ENCODE measurements at regions of chr10 and their contacts with region 1.

Region 1: GRCh38 chr10:106592396-106592795 is 572.1 kb downstream of the SORCS1 start:
- DNase-seq: no peak
- H3K4me3 ChIP-seq: no peak overlapping the region
- H3K27me3 ChIP-seq: no peaks in the 10 kb centered on the region
- CTCF ChIP-seq: no peak

Region 2: GRCh38 chr10:106296750-106297392 is 295.5 kb before region 1 on chr10:
- CTCF ChIA-PET with region 1: no interaction called
- POLR2A ChIA-PET with region 1: interaction called, 11 read pairs
- DNase-seq: no peak
- H3K4me3 ChIP-seq: no peak overlapping the region
- H3K27me3 ChIP-seq: no peaks in the 10 kb centered on the region
- CTCF ChIP-seq: no peak

Region 3: DNA sequence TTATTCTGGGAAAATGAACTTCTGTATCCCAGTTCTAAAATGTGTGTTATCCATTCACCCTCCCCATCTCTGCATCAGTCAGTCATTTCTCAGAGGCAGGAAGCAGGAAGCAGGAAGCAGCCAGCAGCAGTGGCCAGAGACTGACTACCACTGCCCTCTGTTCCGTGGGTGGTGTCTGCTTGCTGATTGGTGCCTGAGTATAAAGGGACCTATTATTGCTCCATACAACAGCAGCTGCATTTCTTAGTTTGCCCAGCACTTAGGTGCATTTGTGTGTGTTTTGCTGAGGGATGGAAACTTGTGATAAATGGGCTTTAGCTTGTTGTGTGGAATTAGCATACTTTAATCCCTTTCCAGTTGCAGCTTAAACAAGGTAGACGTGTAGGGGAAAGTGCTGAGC is 10.1 kb before region 1 on chr10:
- CTCF ChIA-PET with region 1: no interaction called
- POLR2A ChIA-PET with region 1: no interaction called
- DNase-seq: no peak
- H3K4me3 ChIP-seq: no peak overlapping the region
- H3K27me3 ChIP-seq: no peaks in the 10 kb centered on the region
- CTCF ChIP-seq: no peak

Region 4: GRCh38 chr10:106609470-106610266 is 17.3 kb after region 1 on chr10:
- CTCF ChIA-PET with region 1: no interaction called
- POLR2A ChIA-PET with region 1: no interaction called
- DNase-seq: no peak
- H3K4me3 ChIP-seq: no peak overlapping the region
- H3K27me3 ChIP-seq: no peaks in the 10 kb centered on the region
- CTCF ChIP-seq: peak; percentile 29; the same call in 1 of the 2 replicates